ENCODE measurements at regions of chr10 and their contacts with region 1.

Region 1: DNA sequence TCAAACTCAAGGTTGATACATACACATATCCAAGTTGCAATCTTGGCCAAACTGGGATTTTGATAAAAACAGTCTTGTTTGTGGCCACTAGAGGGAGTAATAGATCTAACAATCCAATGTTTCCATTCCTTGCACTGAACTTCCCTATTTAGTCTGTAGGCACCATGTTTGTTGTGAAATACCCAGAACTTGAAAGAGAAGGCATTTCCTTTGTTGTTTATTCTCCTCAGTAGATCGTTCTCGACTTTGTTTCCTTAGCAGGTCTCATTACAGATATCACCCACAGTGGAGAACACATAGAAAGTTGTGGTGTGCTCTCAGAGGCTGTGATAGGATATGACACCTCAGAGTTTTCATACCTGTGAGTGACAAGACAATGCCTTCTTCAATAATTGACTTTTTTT is 70.3 kb upstream of the MXI1 start:
- DNase-seq: no peak
- H3K4me3 ChIP-seq: peak overlapping the region in 1 of 8 donors; percentile 14
- H3K27ac ChIP-seq: peak overlapping the region in 7 of 8 donors; percentile 63 to 86 (median 72)
- H3K4me1 ChIP-seq: peaks cover 11 to 60% (median 20%) of the 10 kb centered on the region in 6 donors
- H3K27me3 ChIP-seq: no peaks in the 10 kb centered on the region
- CTCF ChIP-seq: peak; percentile 48 to 93 (median 85)
- POLR2A ChIP-seq: no peak

Region 2: GRCh38 chr10:109726473-109726872 is 410.7 kb before region 1 on chr10:
- intact Hi-C with region 1: no loop called
- DNase-seq: no peak
- H3K4me3 ChIP-seq: no peak overlapping the region
- H3K27ac ChIP-seq: no peak overlapping the region
- H3K4me1 ChIP-seq: no peaks in the 10 kb centered on the region
- H3K27me3 ChIP-seq: no peaks in the 10 kb centered on the region
- CTCF ChIP-seq: no peak
- POLR2A ChIP-seq: no peak

Region 3: DNA sequence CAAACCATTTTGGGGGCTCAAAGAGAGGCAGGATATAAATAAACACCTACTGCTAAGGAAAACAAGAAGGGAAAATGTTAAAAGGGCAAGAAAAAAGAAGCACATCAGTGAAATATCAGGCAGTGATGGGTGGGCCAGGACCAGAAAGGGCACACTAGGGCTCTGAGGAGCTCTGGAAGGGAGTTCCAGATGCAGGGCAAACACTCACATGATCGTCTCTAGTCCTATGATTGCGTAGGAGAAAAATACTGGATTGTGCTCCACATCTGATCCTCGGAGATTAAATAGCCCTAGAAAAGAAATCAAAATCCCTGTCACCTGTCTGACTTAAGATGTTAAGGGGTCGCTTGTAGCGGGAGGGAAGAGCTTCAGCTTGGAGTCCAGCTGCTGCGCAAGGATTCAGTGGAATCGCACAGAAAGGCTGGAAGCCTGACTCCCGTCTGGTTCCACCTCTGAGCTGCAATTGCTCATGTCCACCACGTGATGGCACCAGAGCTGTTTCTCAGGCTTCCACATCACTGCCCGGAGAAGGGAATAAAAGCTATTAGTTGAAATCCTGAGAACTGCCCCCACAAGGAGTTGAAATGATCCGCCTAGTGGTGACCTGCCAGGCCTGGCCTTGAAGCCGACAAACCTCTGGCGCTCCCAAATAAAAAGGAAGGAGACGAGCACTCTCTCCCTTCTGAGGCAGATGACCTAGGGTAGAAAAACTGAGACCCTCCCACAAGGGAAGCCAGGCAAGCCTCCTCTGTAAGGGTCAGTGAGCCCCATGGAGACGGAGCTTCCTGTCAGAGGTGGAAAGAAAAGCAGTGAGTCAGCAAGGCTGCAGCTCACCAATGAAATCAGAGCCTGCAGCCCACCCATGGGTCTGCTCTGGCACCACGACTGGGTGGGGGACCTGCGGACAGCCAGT is 253.0 kb before region 1 on chr10:
- intact Hi-C with region 1: loop called (anchors 10 kb)
- DNase-seq: peak; percentile 83
- H3K4me3 ChIP-seq: no peak overlapping the region
- H3K27ac ChIP-seq: peak overlapping the region in 3 of 8 donors; percentile 10 to 49 (median 31)
- H3K4me1 ChIP-seq: peaks cover 0 to 15% (median 9%) of the 10 kb centered on the region in 6 donors
- H3K27me3 ChIP-seq: no peaks in the 10 kb centered on the region
- CTCF ChIP-seq: peak; percentile 75 to 94 (median 93)
- POLR2A ChIP-seq: no peak

Region 4: DNA sequence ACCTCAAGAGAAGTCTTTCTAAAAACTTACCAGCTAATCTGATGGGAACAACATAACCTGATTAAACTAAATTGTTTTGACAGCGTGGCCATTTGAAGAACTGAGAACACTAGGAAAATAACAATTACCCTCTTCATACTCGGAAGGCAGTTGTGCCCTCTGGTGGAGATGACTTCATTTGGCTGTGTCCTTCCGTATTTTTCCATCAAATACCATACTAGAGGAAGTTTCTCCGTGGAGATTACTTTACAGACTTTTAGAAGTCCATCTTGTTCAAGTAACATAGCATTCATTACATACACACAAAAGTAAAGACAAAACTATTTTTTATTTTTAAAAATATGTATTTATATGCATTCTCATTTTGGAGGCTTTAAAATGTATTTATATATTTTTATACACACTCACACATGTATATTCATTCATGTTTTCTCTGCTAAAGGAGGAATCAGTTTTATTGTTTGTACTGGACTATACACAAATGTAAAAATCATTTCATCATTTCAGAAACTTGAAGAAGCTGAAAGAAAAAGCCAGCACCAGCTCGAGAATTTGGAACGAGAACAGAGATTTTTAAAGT is 142.4 kb after region 1 on chr10:
- intact Hi-C with region 1: loop called (anchors 5 kb)
- DNase-seq: no peak
- H3K4me3 ChIP-seq: peak overlapping the region in 1 of 8 donors; percentile 9
- H3K27ac ChIP-seq: no peak overlapping the region
- H3K4me1 ChIP-seq: peaks cover 6 to 36% (median 10%) of the 10 kb centered on the region in 6 donors
- H3K27me3 ChIP-seq: no peaks in the 10 kb centered on the region
- CTCF ChIP-seq: peak; percentile 37 to 81 (median 71)
- POLR2A ChIP-seq: no peak